SK-N-SH (cell line): ENCODE measurements at regions of chr18 and their contacts with region 1.

Region 1: DNA sequence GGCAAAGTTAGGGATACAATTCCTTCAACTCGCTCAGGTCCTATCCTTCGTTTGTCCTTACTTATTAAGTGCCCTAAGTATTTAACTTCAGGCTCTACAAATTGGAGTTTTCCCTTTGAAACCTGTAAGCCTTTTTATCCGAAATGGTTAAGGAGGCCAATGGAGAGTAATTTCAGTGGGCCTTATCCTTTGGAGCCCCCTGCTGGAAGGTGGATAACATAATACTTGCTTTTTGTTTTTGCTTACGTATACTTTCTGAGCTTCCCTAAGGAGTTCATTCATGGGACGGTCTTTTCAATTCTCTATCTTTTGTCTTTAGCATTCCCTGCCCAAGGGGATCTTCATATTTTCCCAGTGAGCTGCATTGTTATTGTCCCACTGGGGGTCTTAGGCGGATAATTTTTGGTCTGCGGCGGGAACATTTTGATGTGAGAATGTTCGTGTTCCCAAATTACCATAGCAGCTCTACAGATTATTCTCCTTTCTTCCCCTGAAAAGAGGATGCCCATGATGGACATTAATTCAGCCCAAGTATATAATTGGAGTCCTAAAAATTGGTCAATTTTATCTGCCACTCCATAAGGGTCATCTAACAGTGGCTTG is 34.4 kb upstream of the TRAPPC8 start:
- DNase-seq: peak; percentile 57
- H3K4me3 ChIP-seq: no peak overlapping the region; a peak in 1 of 4 replicates
- H3K27ac ChIP-seq: no peak overlapping the region
- H3K4me1 ChIP-seq: no peaks in the 10 kb centered on the region
- H3K27me3 ChIP-seq: no peaks in the 10 kb centered on the region
- CTCF ChIP-seq: peak; percentile 79
- EP300 ChIP-seq: no peak
- RAD21 ChIP-seq: peak; percentile 88

Region 2: GRCh38 chr18:31741097-31741735 is 236.2 kb before region 1 on chr18:
- CTCF ChIA-PET with region 1: interaction called, 20 read pairs
- POLR2A ChIA-PET with region 1: no interaction called
- DNase-seq: peak; percentile 32
- H3K4me3 ChIP-seq: peak overlapping the region in 1 of 2 experiments; percentile 36; a peak in 1 of 4 replicates
- H3K27ac ChIP-seq: no peak overlapping the region
- H3K4me1 ChIP-seq: no peaks in the 10 kb centered on the region
- H3K27me3 ChIP-seq: peaks cover 13% of the 10 kb centered on the region; the same call in 1 of the 2 replicates
- CTCF ChIP-seq: peak; percentile 93
- EP300 ChIP-seq: no peak
- RAD21 ChIP-seq: peak; percentile 69

Region 3: DNA sequence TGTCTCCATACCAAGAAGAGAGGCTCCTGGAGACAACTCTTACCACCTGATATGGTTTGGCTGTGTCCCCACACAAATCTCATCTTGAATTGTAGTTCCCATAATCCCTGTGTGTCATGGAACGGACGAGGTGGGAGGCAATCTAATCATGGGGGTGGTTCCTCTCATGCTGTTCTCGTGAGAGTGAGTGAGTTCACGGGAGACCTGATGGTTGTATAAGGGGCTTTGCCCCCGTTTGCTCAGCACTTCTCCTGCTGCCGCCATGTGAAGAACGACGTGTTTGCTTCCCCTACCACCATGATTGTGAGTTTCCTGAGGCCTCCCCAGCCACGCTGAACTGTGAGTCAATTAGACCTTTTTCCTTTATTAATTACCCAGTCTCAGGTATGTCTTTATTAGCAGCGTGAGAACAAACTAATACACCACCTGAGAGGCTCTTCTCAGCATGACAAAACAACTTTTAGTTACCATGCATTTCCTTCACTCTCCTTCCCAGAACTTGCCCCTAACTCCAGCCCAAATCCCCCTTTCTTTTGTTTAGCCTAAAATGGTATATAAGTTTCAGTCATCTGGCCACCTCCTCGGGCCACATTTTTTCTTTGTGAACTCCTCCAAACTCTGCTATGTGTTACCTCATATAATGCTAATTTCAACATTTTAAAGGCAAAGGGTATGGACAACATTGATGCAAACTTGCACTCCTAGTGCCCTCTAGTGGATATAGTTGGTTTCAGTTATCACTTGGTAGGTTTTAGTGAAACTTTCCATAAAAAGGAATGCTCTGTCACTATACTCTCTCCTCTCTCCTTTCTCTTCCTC is 158.1 kb before region 1 on chr18:
- CTCF ChIA-PET with region 1: interaction called, 11 read pairs
- POLR2A ChIA-PET with region 1: no interaction called
- DNase-seq: peak; percentile 34
- H3K4me3 ChIP-seq: no peak overlapping the region; a peak in 1 of 4 replicates
- H3K27ac ChIP-seq: no peak overlapping the region
- H3K4me1 ChIP-seq: no peaks in the 10 kb centered on the region
- H3K27me3 ChIP-seq: no peaks in the 10 kb centered on the region
- CTCF ChIP-seq: peak; percentile 86
- EP300 ChIP-seq: no peak
- RAD21 ChIP-seq: peak; percentile 79

Region 4: GRCh38 chr18:31990823-31991222 is 13.5 kb after region 1 on chr18:
- CTCF ChIA-PET with region 1: interaction called, 20 read pairs
- POLR2A ChIA-PET with region 1: no interaction called
- DNase-seq: no peak
- H3K4me3 ChIP-seq: no peak overlapping the region
- H3K27ac ChIP-seq: no peak overlapping the region
- H3K4me1 ChIP-seq: no peaks in the 10 kb centered on the region
- H3K27me3 ChIP-seq: no peaks in the 10 kb centered on the region; the same call in 1 of the 2 replicates
- CTCF ChIP-seq: no peak
- EP300 ChIP-seq: no peak
- RAD21 ChIP-seq: no peak

Region 5: GRCh38 chr18:32200766-32201165 is 223.4 kb after region 1 on chr18:
- CTCF ChIA-PET with region 1: no interaction called
- POLR2A ChIA-PET with region 1: no interaction called
- DNase-seq: peak; percentile 42
- H3K4me3 ChIP-seq: no peak overlapping the region
- H3K27ac ChIP-seq: no peak overlapping the region
- H3K4me1 ChIP-seq: no peaks in the 10 kb centered on the region; a peak in 1 of 4 replicates
- H3K27me3 ChIP-seq: no peaks in the 10 kb centered on the region
- CTCF ChIP-seq: no peak
- EP300 ChIP-seq: no peak
- RAD21 ChIP-seq: no peak

Region 6: DNA sequence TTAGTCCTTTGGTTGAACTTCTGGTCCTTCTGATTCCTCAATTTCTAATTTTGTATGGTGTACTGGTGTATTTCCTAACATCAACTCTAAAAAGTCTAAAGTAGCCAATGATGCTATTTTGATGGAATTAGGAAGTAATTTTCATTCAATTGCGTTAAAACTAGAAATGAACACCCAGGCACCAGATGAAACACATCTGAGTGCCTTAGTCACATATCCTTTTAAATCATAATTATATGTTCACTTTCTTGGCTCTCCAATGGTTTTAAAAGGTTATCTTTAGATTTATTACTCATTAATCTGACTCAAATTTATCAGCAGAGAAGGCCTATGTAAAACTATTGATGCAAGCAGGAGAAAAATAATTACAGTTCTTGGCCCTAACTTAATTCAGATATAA is 373.7 kb after region 1 on chr18:
- CTCF ChIA-PET with region 1: no interaction called
- POLR2A ChIA-PET with region 1: no interaction called
- DNase-seq: no peak
- H3K4me3 ChIP-seq: no peak overlapping the region
- H3K27ac ChIP-seq: peak overlapping the region in 1 of 2 experiments; percentile 96; a peak in 3 of 4 replicates
- H3K4me1 ChIP-seq: peaks cover 2 to 19% of the 10 kb centered on the region in 2 experiments
- H3K27me3 ChIP-seq: no peaks in the 10 kb centered on the region
- CTCF ChIP-seq: no peak
- EP300 ChIP-seq: no peak
- RAD21 ChIP-seq: no peak